Posterior vena cava (tissue), 2 donors: ENCODE measurements at regions of chr2 and their contacts with region 1.

Region 1: GRCh38 chr2:26675701-26676111 is 16.8 kb upstream of the KCNK3 start:
- DNase-seq: peak; percentile 58

Region 2: GRCh38 chr2:25760297-25760696 is 915.4 kb before region 1 on chr2:
- intact Hi-C with region 1: no loop called
- DNase-seq: no peak

Region 3: GRCh38 chr2:26730549-26731344 is 55.0 kb after region 1 on chr2:
- intact Hi-C with region 1: loop called in 1 of 2 experiments (anchors 5 kb)
- DNase-seq: no peak